ENCODE measurements at regions of chr17 and their contacts with region 1.

Region 1: GRCh38 chr17:1546292-1546922 is 16.2 kb downstream of the PITPNA start:
- H3K4me3 ChIP-seq: no peak overlapping the region
- H3K27ac ChIP-seq: no peak overlapping the region
- H3K4me1 ChIP-seq: no peaks in the 10 kb centered on the region
- CTCF ChIP-seq: no peak

Region 2: GRCh38 chr17:1298606-1299005 is 247.8 kb before region 1 on chr17:
- CTCF ChIA-PET with region 1: no interaction called
- POLR2A ChIA-PET with region 1: interaction called, 11 read pairs
- H3K4me3 ChIP-seq: no peak overlapping the region
- H3K27ac ChIP-seq: no peak overlapping the region
- H3K4me1 ChIP-seq: no peaks in the 10 kb centered on the region
- CTCF ChIP-seq: no peak

Region 3: GRCh38 chr17:1509290-1509881 is 37.0 kb before region 1 on chr17:
- CTCF ChIA-PET with region 1: no interaction called
- POLR2A ChIA-PET with region 1: no interaction called
- H3K4me3 ChIP-seq: no peak overlapping the region
- H3K27ac ChIP-seq: no peak overlapping the region
- H3K4me1 ChIP-seq: no peaks in the 10 kb centered on the region
- CTCF ChIP-seq: no peak

Region 4: GRCh38 chr17:1566545-1567199 is 20.3 kb after region 1 on chr17:
- CTCF ChIA-PET with region 1: no interaction called
- POLR2A ChIA-PET with region 1: no interaction called
- H3K4me3 ChIP-seq: no peak overlapping the region
- H3K27ac ChIP-seq: no peak overlapping the region
- H3K4me1 ChIP-seq: no peaks in the 10 kb centered on the region
- CTCF ChIP-seq: no peak